ENCODE measurements at regions of chr13 and their contacts with region 1.

Region 1: DNA sequence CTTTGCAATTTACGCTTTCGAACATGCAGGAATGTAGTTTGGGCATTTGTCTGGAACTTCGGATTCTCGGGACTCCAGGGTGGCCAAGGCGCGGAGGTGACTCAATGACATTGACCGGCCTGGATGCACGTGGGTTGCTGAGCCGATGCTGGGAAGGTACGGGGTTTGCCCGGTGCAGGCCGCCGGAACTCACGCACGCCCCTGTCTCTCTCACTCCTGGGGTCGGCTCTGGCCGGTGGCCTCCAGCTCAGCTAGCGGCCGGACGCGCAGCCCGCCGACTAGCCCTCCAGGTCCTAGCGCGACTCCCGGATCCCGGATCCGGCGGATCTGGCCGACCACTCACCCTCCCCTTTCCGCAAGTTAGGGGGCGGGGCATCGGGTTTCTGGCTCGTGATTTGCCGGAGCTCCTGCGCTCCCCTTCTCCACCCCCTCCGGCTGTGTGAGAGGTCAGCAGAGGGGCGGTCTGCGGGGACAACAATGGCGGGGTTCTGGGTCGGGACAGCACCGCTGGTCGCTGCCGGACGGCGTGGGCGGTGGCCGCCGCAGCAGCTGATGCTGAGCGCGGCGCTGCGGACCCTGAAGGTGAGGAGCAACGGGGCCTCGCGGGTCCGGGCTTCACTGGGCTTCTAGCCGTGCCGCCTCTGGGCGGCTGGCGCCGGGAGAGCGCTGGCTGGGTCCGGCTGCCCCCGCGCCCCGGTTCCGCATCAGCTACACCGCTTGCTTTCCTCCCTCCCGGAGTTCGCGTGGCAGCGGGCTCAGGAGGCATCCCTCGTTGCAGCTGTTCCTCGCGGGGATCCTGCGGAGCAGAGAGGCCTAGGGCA is at the start of gene PCCA:
- DNase-seq: peak; percentile 86
- H3K4me3 Mint-ChIP-seq: peak within 1 kb of the TSS; percentile 93
- H3K27ac Mint-ChIP-seq: peak within 1 kb of the TSS; percentile 37
- H3K4me1 Mint-ChIP-seq: peaks cover 19% of the 10 kb centered on the region
- H3K27me3 Mint-ChIP-seq: no peaks in the 10 kb centered on the region
- total RNA-seq, gene PCCA: 6.8 to 8.1 TPM

Region 2: DNA sequence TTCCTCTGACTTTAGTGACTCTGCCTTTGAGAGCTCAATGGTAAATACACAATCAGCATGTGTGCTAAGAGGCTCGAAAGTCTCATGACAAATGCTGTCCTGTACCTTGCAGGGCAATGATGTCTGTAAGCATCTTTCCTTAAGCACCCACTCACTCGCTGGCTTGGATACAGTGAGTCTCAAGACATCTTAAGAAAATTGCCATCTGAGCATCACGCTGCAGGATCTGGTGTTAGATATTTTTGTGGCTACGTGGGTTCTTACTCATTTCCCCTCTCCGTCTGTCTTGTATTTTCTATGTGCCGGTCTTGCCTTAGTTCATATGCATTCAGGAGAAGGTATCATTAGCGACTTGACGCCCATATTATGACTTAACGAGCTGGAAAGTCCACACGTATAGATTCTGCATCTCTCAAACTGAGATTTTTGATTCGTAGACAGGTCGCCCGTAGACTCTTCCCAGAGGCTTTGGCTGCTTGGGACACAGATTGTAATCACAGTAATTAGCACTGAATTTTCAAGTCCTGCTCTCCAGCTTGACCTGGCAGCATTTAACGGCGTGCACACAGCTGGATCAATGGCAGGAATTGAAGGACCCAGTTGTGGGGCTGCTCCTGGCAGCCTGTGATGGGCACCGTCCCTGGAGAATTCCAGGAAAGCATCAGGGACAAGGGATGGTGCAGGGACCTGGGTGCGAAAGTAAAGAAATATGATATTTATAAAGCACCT is 348.4 kb before region 1 on chr13:
- CTCF ChIA-PET with region 1: no interaction called
- intact Hi-C with region 1: no loop called
- DNase-seq: no peak
- H3K4me3 Mint-ChIP-seq: no peak overlapping the region
- H3K27ac Mint-ChIP-seq: no peak overlapping the region
- H3K4me1 Mint-ChIP-seq: no peaks in the 10 kb centered on the region
- H3K27me3 Mint-ChIP-seq: no peaks in the 10 kb centered on the region

Region 3: DNA sequence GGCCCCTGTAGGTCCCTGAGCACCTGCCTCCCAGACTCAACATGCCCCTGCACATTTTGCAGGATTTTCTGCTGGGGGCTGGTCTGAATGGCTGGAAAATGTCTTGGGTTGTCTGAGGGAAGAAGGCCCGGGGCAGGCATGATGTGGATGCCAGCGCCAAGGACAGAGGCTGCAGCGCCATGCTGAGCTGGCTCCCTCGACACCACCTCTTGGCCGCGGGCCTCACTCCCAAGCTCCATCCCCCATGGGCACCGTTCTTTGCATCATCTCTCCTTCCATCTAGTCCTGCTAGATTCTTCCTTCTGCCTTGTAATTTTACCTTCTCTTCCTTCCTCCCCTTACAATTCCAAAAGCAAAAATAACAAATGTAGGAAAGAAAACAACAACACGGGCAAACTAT is 187.9 kb before region 1 on chr13:
- CTCF ChIA-PET with region 1: no interaction called
- intact Hi-C with region 1: loop called (anchors 5 kb)
- DNase-seq: no peak
- H3K4me3 Mint-ChIP-seq: no peak overlapping the region
- H3K27ac Mint-ChIP-seq: no peak overlapping the region
- H3K4me1 Mint-ChIP-seq: no peaks in the 10 kb centered on the region
- H3K27me3 Mint-ChIP-seq: peaks cover 50% of the 10 kb centered on the region

Region 4: DNA sequence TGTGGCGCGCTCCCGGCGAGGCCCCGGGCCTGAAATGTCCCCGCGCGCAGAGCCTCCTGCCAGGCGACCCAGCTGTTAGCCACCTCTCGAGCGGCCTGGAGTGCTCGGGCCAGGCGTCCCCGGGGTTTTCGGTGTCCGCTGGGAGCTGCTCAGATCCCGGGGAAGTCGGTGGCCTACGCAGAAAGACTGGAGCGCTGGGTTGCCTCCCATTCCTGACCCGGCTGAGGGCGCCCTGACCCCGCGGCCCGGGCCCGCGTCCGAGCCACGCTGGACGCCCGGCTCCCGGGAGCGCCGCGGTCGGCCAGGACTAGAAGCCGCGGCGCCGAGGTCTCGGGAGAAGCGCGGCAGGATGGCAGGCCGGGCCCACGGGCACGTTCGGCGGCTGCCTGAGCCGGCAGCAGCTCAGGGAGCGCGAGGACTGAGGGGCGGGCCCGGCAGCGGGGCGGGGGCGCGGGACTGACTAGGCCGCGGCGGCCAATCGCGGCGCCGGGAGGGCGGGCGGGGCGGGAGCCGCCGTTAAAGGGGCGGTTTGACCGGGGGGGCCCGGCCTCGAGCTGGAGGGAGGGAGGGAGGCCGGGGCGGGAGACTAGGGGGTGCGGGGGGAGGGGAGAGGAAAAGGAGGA is 108.5 kb before region 1 on chr13:
- CTCF ChIA-PET with region 1: no interaction called
- intact Hi-C with region 1: loop called (anchors 5 kb)
- DNase-seq: peak; percentile 62
- H3K4me3 Mint-ChIP-seq: peak overlapping the region; percentile 15
- H3K27ac Mint-ChIP-seq: no peak overlapping the region
- H3K4me1 Mint-ChIP-seq: peaks cover 23% of the 10 kb centered on the region
- H3K27me3 Mint-ChIP-seq: peaks cover 69% of the 10 kb centered on the region

Region 5: GRCh38 chr13:100129605-100130004 is 40.8 kb after region 1 on chr13:
- CTCF ChIA-PET with region 1: no interaction called
- intact Hi-C with region 1: loop called (anchors 1 kb)
- DNase-seq: no peak
- H3K4me3 Mint-ChIP-seq: no peak overlapping the region
- H3K27ac Mint-ChIP-seq: no peak overlapping the region
- H3K4me1 Mint-ChIP-seq: peaks cover 23% of the 10 kb centered on the region
- H3K27me3 Mint-ChIP-seq: no peaks in the 10 kb centered on the region

Region 6: GRCh38 chr13:100203696-100204367 is 115.0 kb after region 1 on chr13:
- CTCF ChIA-PET with region 1: no interaction called
- intact Hi-C with region 1: loop called (anchors 2 kb)
- DNase-seq: peak; percentile 8
- H3K4me3 Mint-ChIP-seq: no peak overlapping the region
- H3K27ac Mint-ChIP-seq: peak overlapping the region; percentile 47
- H3K4me1 Mint-ChIP-seq: peaks cover 17% of the 10 kb centered on the region
- H3K27me3 Mint-ChIP-seq: no peaks in the 10 kb centered on the region

Region 7: DNA sequence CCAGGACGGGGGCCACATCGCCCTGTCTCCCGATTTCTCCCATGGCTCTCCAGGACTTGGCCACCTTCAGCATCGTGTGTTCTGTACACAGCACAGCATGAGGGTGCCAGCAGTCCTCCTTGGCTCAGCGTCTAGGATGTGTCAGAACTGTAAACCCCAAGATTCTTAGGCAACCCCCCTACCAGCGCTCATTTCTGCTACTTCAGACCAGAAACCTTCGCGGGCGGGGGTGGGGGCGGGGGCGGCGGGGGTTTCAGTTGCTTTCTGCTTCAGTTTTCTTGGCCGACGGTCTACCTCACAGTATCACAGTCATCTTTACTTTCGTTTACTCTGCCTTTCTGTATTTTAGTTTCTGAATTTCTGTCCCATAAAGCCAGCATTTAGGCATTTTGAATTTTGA is 417.3 kb after region 1 on chr13:
- CTCF ChIA-PET with region 1: no interaction called
- intact Hi-C with region 1: loop called (anchors 5 kb)
- DNase-seq: peak; percentile 59
- H3K4me3 Mint-ChIP-seq: peak overlapping the region; percentile 4
- H3K27ac Mint-ChIP-seq: no peak overlapping the region
- H3K4me1 Mint-ChIP-seq: peaks cover 14% of the 10 kb centered on the region
- H3K27me3 Mint-ChIP-seq: peaks cover 8% of the 10 kb centered on the region